Gastrocnemius medialis (tissue), 4 donors: ENCODE measurements at regions of chr16 and their contacts with region 1.

Region 1: DNA sequence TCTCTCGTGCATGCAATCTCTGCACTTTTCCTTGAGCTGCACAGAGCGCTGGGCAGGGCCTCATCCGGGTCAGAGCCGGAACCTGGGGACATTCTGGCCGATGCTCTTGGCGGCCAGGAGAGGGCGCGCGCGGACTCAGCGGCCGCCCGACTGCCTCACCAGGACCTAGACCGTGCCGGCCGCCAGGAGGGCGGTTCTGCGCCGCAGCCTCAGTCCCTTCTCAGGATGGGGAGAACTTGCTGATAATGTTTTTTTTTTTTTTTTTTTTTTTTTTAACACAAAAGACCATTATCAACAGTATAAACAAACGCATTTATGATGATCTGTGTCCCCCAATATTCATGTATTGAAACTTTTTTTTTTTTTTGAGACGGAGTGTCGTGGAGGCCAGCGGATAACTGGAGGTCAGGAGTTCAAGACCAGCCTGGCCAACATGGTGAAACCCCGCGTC is 8.1 kb upstream of the FLYWCH2 start:
- DNase-seq: peak; percentile 46 to 71
- ATAC-seq: peak; percentile 94 to 97
- H3K4me3 ChIP-seq: no peak overlapping the region
- H3K27ac ChIP-seq: peak overlapping the region in 2 of 4 donors; percentile 42 to 52
- H3K4me1 ChIP-seq: peaks cover 16 to 20% of the 10 kb centered on the region in 2 donors
- H3K27me3 ChIP-seq: no peaks in the 10 kb centered on the region
- CTCF ChIP-seq: peak; percentile 89 to 97 (median 93)
- POLR2A ChIP-seq: no peak

Region 2: GRCh38 chr16:2911580-2912329 is 36.8 kb after region 1 on chr16 and contains the start of gene FLYWCH1:
- in situ Hi-C with region 1: loop called in 1 of 4 experiments (anchors 5 kb)
- intact Hi-C with region 1: loop called (anchors 5 kb)
- DNase-seq: peak; percentile 97 to 98
- ATAC-seq: peak; percentile 90 to 95
- H3K4me3 ChIP-seq: peak within 1 kb of the TSS; percentile 70 to 91 (median 83)
- H3K27ac ChIP-seq: peak within 1 kb of the TSS; percentile 89 to 97 (median 91)
- H3K4me1 ChIP-seq: peaks cover 13 to 15% of the 10 kb centered on the region in 2 donors
- H3K27me3 ChIP-seq: no peaks in the 10 kb centered on the region
- CTCF ChIP-seq: peak in 1 of 5 experiments; percentile 29
- POLR2A ChIP-seq: peak; percentile 89 to 91
- total RNA-seq, gene FLYWCH1: 41.7 to 49.7 (median 44.0) TPM

Region 3: DNA sequence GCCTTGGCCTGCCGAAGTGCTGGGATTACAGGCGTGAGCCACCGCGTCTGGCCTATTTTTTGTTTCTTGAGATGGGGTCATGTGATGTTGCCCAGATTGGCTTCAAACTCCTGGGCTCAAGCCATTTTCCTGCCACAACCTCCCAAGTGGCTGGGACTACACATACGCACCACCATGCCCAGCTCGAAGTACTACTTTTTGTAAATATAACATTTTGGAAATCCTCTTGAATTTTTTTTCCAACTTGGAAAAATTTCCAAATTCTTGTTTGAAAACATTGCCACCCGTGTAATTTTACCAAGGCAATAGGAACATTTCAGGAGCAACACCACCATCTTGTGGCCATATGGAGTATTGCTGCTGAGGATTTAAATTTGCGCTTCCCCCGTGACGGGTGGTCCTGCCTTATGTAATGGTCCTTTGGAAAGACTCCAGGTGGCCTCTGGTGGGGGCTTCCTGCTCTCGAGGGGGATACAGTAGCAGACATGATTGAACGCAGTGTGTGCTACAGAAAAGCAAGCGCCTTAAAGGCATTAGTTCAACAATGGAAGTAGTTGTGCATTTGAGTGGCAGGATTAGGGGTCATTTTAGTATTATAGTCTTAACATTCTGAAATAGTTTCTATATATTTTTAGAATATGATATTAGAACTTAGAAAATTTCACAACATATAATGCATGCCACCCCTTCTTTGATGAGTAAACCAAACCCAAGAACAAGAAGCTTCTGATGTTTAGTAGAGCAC is 44.7 kb after region 1 on chr16:
- in situ Hi-C with region 1: loop called (anchors 5 to 10 kb)
- intact Hi-C with region 1: loop called (anchors 5 kb)
- DNase-seq: peak; percentile 49 to 70
- ATAC-seq: peak; percentile 84 to 85
- H3K4me3 ChIP-seq: no peak overlapping the region
- H3K27ac ChIP-seq: peak overlapping the region; percentile 64 to 74 (median 66)
- H3K4me1 ChIP-seq: peaks cover 3 to 6% of the 10 kb centered on the region in 2 donors
- H3K27me3 ChIP-seq: no peaks in the 10 kb centered on the region
- CTCF ChIP-seq: peak; percentile 91 to 97 (median 93)
- POLR2A ChIP-seq: no peak

Region 4: DNA sequence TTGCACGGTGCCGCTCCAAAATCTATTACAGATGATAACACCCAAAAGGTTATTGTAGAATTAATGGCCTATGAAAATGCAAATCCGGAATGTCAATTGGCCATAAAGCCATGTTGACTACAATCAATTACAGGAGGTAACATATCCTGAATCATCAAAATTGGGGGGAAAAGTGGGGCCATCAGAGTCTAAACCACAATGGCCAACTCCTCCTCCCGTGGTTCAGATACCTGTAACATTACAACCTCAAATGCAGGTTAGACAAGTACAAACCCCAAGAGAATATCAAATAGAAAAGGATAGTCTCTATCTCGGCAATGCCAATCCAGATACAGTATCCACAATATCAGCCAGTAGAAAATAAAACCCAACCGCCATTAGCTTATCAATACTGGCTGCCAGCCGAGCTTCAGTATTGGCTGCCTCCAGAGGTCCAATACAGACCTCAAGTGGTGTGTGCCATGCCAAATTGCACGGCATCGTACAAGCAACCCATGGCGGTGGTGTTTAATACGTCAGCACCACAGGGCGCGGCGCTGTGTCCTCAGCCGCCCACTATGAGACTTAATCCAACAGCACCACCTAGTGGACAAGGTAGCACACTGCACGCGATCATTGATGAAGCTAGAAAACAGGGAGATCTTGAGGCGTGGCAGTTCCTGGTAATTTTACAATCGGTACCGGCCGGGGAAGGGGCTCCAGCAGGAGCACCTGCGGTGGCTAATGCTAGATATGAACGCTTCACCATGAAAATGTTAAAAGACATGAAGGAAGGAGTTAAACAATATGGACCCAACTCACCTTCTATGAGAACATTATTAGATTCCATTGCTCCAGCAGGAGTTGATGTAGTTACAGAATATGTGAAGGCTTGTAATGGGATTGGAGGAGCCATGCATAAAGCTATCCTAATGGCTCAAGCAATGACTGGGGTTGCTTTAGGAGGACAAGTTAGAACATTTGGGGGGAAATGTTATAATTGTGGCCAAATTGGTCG is 52.0 kb after region 1 on chr16:
- in situ Hi-C with region 1: loop called in 3 of 4 experiments (anchors 5 to 10 kb)
- intact Hi-C with region 1: loop called (anchors 2 kb)
- DNase-seq: peak; percentile 58 to 81
- ATAC-seq: peak; percentile 85 to 92
- H3K4me3 ChIP-seq: peak overlapping the region in 3 of 4 donors; percentile 5 to 34 (median 14)
- H3K27ac ChIP-seq: no peak overlapping the region
- H3K4me1 ChIP-seq: peaks cover 0 to 5% of the 10 kb centered on the region in 2 donors
- H3K27me3 ChIP-seq: no peaks in the 10 kb centered on the region
- CTCF ChIP-seq: peak; percentile 91 to 97 (median 95)
- POLR2A ChIP-seq: no peak